Dendritic cell treated with granulocyte-macrophage colony-stimulating factor and Interleukin-4, amounts not matched to agents 40 ng/mL and 50 ng/mL, for 4 days (primary cell): ENCODE measurements at regions of chr17 and their contacts with region 1.

Region 1: GRCh38 chr17:44324571-44325275 is at the start of gene SLC25A39:
- H3K4me3 Mint-ChIP-seq: peak within 1 kb of the TSS; percentile 90
- H3K27ac Mint-ChIP-seq: peak within 1 kb of the TSS; percentile 98
- H3K4me1 Mint-ChIP-seq: peaks cover 19% of the 10 kb centered on the region
- H3K27me3 Mint-ChIP-seq: no peaks in the 10 kb centered on the region

Region 2: GRCh38 chr17:44210342-44211192 is 114.2 kb before region 1 on chr17:
- intact Hi-C with region 1: loop called (anchors 2 kb)
- H3K4me3 Mint-ChIP-seq: no peak overlapping the region
- H3K27ac Mint-ChIP-seq: peak overlapping the region; percentile 66
- H3K4me1 Mint-ChIP-seq: peaks cover 75% of the 10 kb centered on the region
- H3K27me3 Mint-ChIP-seq: no peaks in the 10 kb centered on the region

Region 3: GRCh38 chr17:44279666-44280391 is 44.9 kb before region 1 on chr17:
- intact Hi-C with region 1: loop called (anchors 10 kb)
- H3K4me3 Mint-ChIP-seq: peak overlapping the region; percentile 32
- H3K27ac Mint-ChIP-seq: peak overlapping the region; percentile 86
- H3K4me1 Mint-ChIP-seq: peaks cover 30% of the 10 kb centered on the region
- H3K27me3 Mint-ChIP-seq: peaks cover 20% of the 10 kb centered on the region

Region 4: GRCh38 chr17:44308320-44308818 is 16.4 kb before region 1 on chr17 and contains the start of gene RUNDC3A:
- intact Hi-C with region 1: no loop called
- H3K4me3 Mint-ChIP-seq: peak within 1 kb of the TSS; percentile 47
- H3K27ac Mint-ChIP-seq: no peak within 1 kb of the TSS
- H3K4me1 Mint-ChIP-seq: peaks cover 20% of the 10 kb centered on the region
- H3K27me3 Mint-ChIP-seq: peaks cover 82% of the 10 kb centered on the region

Region 5: DNA sequence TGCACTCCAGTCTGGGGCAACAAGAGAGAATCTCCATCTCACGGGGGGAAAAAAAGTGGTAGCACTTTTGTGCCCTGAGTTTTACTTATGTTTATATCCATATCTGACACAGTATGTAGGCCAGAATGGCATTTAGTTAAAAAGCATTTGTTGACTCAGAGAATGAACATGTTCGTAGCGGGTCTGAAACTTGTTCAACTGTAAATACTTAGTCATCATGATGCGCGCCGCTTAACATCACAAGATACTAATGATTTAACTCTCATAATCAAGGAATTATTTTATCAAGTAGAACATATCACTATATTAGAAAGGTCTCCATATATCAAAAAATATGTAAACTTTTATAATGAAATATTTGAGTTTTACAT is 120.0 kb after region 1 on chr17:
- intact Hi-C with region 1: no loop called
- H3K4me3 Mint-ChIP-seq: no peak overlapping the region
- H3K27ac Mint-ChIP-seq: no peak overlapping the region
- H3K4me1 Mint-ChIP-seq: no peaks in the 10 kb centered on the region
- H3K27me3 Mint-ChIP-seq: no peaks in the 10 kb centered on the region